ENCODE measurements at regions of chr1 and their contacts with region 1.

Region 1: DNA sequence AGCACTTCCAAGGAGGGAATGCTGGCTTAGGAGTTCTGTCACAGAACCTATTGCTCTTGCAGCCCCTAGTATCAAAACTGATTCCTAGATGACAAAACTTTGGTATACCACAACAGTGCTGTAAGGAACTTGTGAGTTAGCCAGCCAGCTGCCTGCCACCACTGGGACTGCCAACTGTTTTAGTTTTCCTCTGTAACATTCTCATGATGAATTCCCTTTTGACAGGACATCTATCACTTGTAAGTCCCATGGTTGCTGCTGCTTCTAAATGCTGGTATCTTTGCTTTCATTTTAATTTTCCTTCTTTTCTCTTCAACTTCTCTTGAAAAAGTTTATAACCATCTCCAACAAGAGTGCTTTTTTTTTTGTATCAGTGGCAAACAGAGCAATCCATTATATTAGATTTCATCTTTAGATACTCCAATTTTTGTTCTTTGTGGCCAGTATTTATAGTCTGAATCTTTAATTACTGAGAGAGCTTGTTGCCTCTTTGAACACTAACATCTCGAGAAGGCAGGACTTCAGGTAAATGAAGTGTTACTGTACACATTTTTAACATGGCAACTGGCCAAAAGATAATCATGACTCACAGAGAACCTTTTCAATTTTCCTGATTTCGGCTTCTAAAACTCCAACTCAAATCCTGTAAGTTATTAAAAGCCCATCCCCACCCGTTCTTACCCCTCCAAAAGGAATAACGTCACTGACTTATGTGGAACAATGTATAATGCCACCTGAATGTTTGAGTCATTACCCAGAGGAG is 19.8 kb downstream of the DBT start:
- DNase-seq: no peak
- H3K4me3 Mint-ChIP-seq: no peak overlapping the region
- H3K27ac Mint-ChIP-seq: no peak overlapping the region
- H3K4me1 Mint-ChIP-seq: peaks cover 20% of the 10 kb centered on the region
- H3K27me3 Mint-ChIP-seq: no peaks in the 10 kb centered on the region

Region 2: GRCh38 chr1:100217834-100218233 is 12.0 kb before region 1 on chr1:
- CTCF ChIA-PET with region 1: no interaction called
- POLR2A ChIA-PET with region 1: no interaction called
- intact Hi-C with region 1: no loop called
- DNase-seq: no peak
- H3K4me3 Mint-ChIP-seq: no peak overlapping the region
- H3K27ac Mint-ChIP-seq: no peak overlapping the region
- H3K4me1 Mint-ChIP-seq: peaks cover 7% of the 10 kb centered on the region
- H3K27me3 Mint-ChIP-seq: no peaks in the 10 kb centered on the region

Region 3: GRCh38 chr1:100249537-100250257 is 19.8 kb after region 1 on chr1 and contains the start of gene DBT:
- CTCF ChIA-PET with region 1: no interaction called
- POLR2A ChIA-PET with region 1: no interaction called
- intact Hi-C with region 1: loop called (anchors 1 kb)
- DNase-seq: peak; percentile 96
- H3K4me3 Mint-ChIP-seq: no peak within 1 kb of the TSS
- H3K27ac Mint-ChIP-seq: no peak within 1 kb of the TSS
- H3K4me1 Mint-ChIP-seq: peaks cover 21% of the 10 kb centered on the region
- H3K27me3 Mint-ChIP-seq: no peaks in the 10 kb centered on the region
- total RNA-seq, gene DBT: 11.4 to 11.7 TPM

Region 4: DNA sequence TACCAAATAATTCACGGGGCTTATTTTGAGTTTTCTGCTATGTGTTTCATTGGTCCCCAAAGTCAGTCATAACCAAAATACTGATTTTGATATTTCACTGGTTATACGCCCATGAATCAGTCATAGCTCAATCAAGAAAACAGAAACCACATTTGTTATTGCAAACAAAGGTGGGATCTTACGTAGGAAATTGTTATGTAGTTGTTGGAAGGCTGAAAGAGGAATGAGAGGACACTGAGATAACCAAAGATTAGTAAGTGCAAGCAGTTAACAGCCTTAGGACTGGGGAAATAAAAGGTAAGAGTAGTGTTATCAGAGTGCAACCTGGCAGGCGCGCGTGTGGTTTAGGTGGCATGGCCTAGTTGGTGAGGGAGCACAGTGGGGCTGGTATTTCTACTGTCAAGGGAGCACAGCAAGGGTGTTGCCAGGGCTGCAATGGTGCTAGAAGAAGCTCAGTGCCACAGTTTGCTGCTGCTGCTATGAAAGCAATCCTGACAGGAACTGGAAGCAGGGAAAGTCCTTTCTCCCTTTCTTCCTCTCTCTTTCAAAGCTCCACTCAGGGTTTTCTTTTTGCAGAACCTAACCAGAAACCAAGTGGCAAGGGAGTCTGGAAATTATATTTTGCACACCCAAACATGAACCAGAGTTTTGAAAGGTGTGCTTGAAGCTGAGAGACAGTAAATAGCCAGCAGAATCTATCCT is 69.8 kb after region 1 on chr1:
- CTCF ChIA-PET with region 1: no interaction called
- POLR2A ChIA-PET with region 1: no interaction called
- intact Hi-C with region 1: loop called (anchors 1 kb)
- DNase-seq: peak; percentile 63
- H3K4me3 Mint-ChIP-seq: no peak overlapping the region
- H3K27ac Mint-ChIP-seq: no peak overlapping the region
- H3K4me1 Mint-ChIP-seq: peaks cover 12% of the 10 kb centered on the region
- H3K27me3 Mint-ChIP-seq: no peaks in the 10 kb centered on the region

Region 5: DNA sequence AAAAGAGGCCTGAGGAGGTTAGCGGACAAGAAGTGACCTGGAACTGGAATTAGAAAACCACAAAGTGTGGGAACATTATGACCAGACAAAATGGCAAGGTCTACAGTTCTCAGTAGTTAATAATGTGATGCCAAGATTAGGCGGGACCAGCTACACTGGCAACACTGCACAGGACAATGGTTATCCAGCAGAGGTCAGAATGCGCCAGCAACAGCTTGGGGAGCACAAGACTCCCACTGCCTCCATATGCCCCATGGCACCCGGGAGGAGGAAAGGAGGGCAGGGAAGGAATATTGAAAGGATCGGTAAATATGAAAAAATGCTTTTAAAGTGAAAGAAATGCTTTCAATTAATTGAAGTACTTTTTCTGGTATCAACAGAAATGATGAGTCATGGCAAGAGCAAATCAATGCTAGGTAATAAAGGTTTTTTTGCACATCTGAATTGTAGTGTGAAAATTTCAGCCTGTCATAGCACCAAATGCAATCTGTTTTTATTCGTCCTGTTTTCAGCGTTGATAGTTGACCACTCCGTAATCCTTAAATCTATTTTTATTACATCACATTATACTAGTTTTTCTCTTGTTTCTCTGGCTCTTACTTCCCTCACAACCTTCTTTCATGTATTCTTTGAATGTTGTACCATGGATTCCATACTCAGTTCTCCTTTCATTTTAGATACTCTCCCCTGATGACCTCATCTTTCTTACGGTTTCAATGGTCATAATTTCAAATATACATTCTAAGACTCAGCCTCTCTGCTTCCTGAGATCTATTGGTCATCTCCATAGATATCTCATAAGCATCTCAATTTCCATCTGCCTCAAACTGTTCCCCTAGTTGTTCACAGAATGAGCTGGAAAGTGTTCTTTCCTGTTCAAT is 520.4 kb after region 1 on chr1:
- CTCF ChIA-PET with region 1: no interaction called
- POLR2A ChIA-PET with region 1: no interaction called
- intact Hi-C with region 1: no loop called
- DNase-seq: no peak
- H3K4me3 Mint-ChIP-seq: no peak overlapping the region
- H3K27ac Mint-ChIP-seq: no peak overlapping the region
- H3K4me1 Mint-ChIP-seq: no peaks in the 10 kb centered on the region
- H3K27me3 Mint-ChIP-seq: peaks cover 5% of the 10 kb centered on the region

Measured in activated CD4-positive, alpha-beta memory T cell treated with anti-CD3 and anti-CD28 coated beads for 36 hours (primary cell).